Activated T-helper 1 cell treated with anti-CD3 and anti-CD28 coated beads, Interleukin-12 subunit alpha, Interleukin-12 subunit beta, Interleukin-2, Interleukin-4 antibody, amounts not matched to agents 30 ng/mL and 10 ng/mL and 1 ng/mL, durations not matched to agents 14 hours and 24 hours and 36 hours (primary cell): ENCODE measurements at regions of chr1 and their contacts with region 1.

Region 1: GRCh38 chr1:151472856-151473731 is 13.8 kb upstream of the POGZ start:
- DNase-seq: no peak
- H3K4me3 Mint-ChIP-seq: peak overlapping the region; percentile 67
- H3K27ac Mint-ChIP-seq: peak overlapping the region; percentile 61
- H3K4me1 Mint-ChIP-seq: peaks cover 14% of the 10 kb centered on the region
- H3K27me3 Mint-ChIP-seq: peaks cover 2% of the 10 kb centered on the region

Region 2: GRCh38 chr1:151435160-151435559 is 37.9 kb before region 1 on chr1:
- intact Hi-C with region 1: no loop called
- DNase-seq: no peak
- H3K4me3 Mint-ChIP-seq: no peak overlapping the region
- H3K27ac Mint-ChIP-seq: no peak overlapping the region
- H3K4me1 Mint-ChIP-seq: peaks cover 7% of the 10 kb centered on the region
- H3K27me3 Mint-ChIP-seq: no peaks in the 10 kb centered on the region

Region 3: GRCh38 chr1:151494741-151495281 is 21.7 kb after region 1 on chr1:
- intact Hi-C with region 1: loop called (anchors 1 kb)
- DNase-seq: no peak
- H3K4me3 Mint-ChIP-seq: no peak overlapping the region
- H3K27ac Mint-ChIP-seq: no peak overlapping the region
- H3K4me1 Mint-ChIP-seq: peaks cover 12% of the 10 kb centered on the region
- H3K27me3 Mint-ChIP-seq: peaks cover 13% of the 10 kb centered on the region

Region 4: GRCh38 chr1:151534665-151535278 is 61.7 kb after region 1 on chr1:
- intact Hi-C with region 1: no loop called
- DNase-seq: peak; percentile 67
- H3K4me3 Mint-ChIP-seq: no peak overlapping the region
- H3K27ac Mint-ChIP-seq: no peak overlapping the region
- H3K4me1 Mint-ChIP-seq: no peaks in the 10 kb centered on the region
- H3K27me3 Mint-ChIP-seq: peaks cover 5% of the 10 kb centered on the region